ENCODE measurements at regions of chr1 and their contacts with region 1.

Region 1: GRCh38 chr1:230310381-230311163 is 115.6 kb downstream of the PGBD5 start:
- DNase-seq: peak; percentile 64
- ATAC-seq: peak; percentile 80
- H3K4me3 Mint-ChIP-seq: no peak overlapping the region
- H3K27ac Mint-ChIP-seq: no peak overlapping the region
- H3K4me1 Mint-ChIP-seq: peaks cover 17% of the 10 kb centered on the region
- H3K27me3 Mint-ChIP-seq: peaks cover 4% of the 10 kb centered on the region
- CTCF ChIP-seq: peak; percentile 89

Region 2: DNA sequence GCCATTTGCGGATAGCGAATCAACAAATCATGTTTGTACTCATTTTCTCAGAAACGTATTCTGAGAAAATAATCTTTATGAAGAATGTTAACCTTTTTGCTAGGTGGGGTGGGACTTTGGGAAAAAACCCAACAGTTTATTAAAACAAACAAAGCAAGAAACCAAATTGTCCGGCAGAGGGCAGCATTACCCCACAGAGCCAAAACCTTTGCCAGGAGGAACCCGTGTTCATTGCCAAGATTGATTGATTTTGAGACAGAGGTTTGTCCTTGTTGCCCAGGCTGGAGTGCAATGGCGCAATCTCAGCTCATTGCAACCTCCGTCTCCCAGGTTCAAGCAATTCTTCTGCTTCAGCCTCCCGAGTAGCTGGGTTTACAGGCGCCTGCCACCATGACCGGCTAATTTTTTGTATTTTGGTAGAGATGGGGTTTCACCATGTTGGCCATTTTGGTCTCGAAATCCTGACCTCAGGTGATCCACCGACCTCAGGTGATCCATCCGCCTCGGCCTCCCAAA is 1646.1 kb before region 1 on chr1:
- CTCF ChIA-PET with region 1: no interaction called
- POLR2A ChIA-PET with region 1: no interaction called
- intact Hi-C with region 1: loop called (anchors 5 kb)
- DNase-seq: peak; percentile 52
- ATAC-seq: peak; percentile 49
- H3K4me3 Mint-ChIP-seq: no peak overlapping the region
- H3K27ac Mint-ChIP-seq: no peak overlapping the region
- H3K4me1 Mint-ChIP-seq: no peaks in the 10 kb centered on the region
- H3K27me3 Mint-ChIP-seq: peaks cover 8% of the 10 kb centered on the region
- CTCF ChIP-seq: peak; percentile 77

Region 3: GRCh38 chr1:229514578-229515275 is 795.8 kb before region 1 on chr1:
- CTCF ChIA-PET with region 1: no interaction called
- POLR2A ChIA-PET with region 1: interaction called, 8 read pairs
- intact Hi-C with region 1: loop called (anchors 1 kb)
- DNase-seq: peak; percentile 19
- ATAC-seq: peak; percentile 97
- H3K4me3 Mint-ChIP-seq: no peak overlapping the region
- H3K27ac Mint-ChIP-seq: no peak overlapping the region
- H3K4me1 Mint-ChIP-seq: peaks cover 4% of the 10 kb centered on the region
- H3K27me3 Mint-ChIP-seq: no peaks in the 10 kb centered on the region
- CTCF ChIP-seq: peak; percentile 15

Region 4: DNA sequence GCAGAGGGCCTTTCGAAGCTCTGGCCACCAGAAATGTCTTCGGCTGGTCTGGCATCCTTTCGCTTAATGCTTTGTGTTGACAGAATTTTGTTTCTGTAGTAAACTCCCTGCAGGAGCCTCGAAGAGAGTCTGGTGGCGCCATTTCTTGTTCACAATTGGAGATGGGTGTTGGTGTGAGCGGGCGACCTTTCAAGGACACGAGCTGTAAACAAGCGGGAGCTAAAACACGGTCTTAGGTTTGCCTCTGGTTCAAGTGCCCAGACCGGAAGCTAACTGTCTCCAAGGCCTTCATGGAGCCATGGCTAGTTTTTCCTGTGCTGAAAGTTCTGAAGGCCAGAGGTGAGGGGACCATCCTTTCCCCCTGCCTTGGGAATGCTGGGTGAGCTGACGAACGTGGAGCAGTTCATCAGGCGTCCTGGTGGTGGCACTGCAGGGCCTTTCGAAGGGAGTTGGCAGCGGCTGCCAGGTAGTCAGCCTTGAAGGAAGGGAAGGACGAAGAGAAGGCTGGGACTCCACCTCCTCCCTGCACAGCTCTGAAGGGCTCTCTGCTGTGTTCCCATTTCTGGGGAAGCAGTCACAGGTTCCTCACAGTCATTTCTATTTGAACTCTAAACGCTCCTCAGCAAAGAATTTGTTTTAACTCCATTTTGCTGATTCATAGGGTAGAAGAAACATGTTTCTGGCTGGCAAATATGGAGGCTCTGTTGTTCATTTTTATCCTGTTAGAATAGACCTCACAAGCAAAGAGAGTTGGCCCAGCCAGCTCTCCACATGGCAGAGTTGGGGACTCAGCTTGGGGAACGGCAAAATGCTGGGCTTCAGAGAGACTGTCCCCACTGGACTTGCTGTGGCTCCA is 649.3 kb before region 1 on chr1:
- CTCF ChIA-PET with region 1: interaction called, 116 read pairs
- POLR2A ChIA-PET with region 1: no interaction called
- intact Hi-C with region 1: loop called (anchors 1 kb)
- DNase-seq: peak; percentile 70
- ATAC-seq: peak; percentile 87
- H3K4me3 Mint-ChIP-seq: no peak overlapping the region
- H3K27ac Mint-ChIP-seq: peak overlapping the region; percentile 50
- H3K4me1 Mint-ChIP-seq: peaks cover 11% of the 10 kb centered on the region
- H3K27me3 Mint-ChIP-seq: no peaks in the 10 kb centered on the region
- CTCF ChIP-seq: peak; percentile 21

Region 5: DNA sequence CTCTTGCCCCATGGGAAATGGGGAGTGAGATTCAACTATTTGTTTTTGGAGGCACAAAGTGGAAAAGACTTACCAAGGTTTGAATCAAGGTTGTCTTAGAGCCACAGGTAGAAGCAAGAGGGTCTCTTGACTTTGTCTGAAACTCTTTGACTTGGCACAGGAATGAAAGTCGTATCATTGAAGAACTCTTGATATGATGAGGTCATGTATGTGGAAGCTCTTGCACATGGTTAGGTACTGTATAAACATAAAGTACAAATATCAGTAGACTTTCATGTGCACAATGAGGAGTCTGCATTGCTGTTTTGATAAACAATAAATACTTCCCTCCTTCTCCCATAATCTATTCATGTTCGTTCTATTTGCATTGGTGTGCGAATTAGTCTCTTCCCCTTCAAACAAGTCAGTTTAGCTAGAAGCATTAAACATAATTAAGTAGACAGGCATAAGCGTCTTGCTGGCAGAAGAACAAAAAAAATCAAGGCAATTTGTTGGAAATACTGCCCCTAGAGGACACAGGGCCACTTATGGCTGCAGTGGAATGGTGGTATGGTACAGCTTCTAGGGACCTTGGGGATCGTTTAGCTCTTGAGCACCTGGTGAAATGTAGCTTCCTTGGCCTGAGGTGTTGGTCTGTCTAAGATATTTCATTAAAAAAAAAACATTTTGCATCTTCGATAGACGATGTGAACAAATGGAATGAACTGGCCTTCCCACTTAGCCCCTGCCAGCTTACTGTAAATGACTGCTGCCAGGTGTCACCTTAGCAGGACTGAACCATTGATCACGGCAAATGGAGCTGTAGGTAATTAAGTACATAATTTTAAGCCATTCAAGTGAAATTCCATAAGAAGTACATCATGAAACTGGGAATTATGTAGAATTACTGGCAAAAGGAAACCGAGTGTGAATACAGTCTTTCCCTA is 461.6 kb before region 1 on chr1:
- CTCF ChIA-PET with region 1: no interaction called
- POLR2A ChIA-PET with region 1: no interaction called
- intact Hi-C with region 1: loop called (anchors 10 kb)
- DNase-seq: no peak
- ATAC-seq: no peak
- H3K4me3 Mint-ChIP-seq: no peak overlapping the region
- H3K27ac Mint-ChIP-seq: no peak overlapping the region
- H3K4me1 Mint-ChIP-seq: peaks cover 25% of the 10 kb centered on the region
- H3K27me3 Mint-ChIP-seq: peaks cover 2% of the 10 kb centered on the region
- CTCF ChIP-seq: no peak

Region 6: DNA sequence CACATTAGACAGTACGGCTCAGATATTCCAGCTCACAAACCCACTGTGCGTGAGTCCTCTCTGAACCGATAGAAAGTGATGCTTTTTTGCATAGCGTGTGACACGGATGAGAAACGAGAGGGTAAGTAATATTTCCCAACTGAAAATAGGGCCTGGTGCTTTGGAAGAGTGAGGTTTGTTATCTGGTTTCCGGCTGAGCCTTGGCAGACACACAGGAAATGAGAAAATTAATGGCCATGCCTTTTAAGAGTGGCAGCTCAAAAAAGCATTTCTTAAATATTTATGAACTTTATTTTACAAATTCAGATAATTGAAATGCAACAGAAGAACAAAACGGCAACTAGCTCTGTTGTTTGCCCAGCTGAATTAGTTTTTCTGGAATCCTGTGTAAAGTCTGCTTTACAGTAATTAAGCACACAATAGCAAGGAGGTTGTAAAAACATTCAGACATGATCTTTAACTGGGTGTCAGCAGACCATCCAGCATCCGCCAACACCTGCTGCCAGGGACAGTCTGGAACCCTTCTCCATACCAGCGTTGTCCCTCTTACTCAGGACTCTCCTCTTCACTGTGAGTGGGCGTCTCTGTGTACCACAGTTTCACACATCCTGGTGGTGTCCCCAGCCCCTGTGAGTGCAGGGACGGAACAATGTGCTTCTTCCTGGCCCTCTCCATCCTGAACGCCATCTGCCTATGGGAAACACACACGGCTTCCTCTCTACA is 39.9 kb before region 1 on chr1:
- CTCF ChIA-PET with region 1: no interaction called
- POLR2A ChIA-PET with region 1: interaction called, 5 read pairs
- intact Hi-C with region 1: loop called (anchors 5 kb)
- DNase-seq: no peak
- ATAC-seq: peak; percentile 72
- H3K4me3 Mint-ChIP-seq: peak overlapping the region; percentile 42
- H3K27ac Mint-ChIP-seq: peak overlapping the region; percentile 63
- H3K4me1 Mint-ChIP-seq: peaks cover 49% of the 10 kb centered on the region
- H3K27me3 Mint-ChIP-seq: no peaks in the 10 kb centered on the region
- CTCF ChIP-seq: no peak